Activated CD4-positive, alpha-beta T cell treated with anti-CD3 and anti-CD28 coated beads for 36 hours (primary cell): ENCODE measurements at regions of chr10 and their contacts with region 1.

Region 1: DNA sequence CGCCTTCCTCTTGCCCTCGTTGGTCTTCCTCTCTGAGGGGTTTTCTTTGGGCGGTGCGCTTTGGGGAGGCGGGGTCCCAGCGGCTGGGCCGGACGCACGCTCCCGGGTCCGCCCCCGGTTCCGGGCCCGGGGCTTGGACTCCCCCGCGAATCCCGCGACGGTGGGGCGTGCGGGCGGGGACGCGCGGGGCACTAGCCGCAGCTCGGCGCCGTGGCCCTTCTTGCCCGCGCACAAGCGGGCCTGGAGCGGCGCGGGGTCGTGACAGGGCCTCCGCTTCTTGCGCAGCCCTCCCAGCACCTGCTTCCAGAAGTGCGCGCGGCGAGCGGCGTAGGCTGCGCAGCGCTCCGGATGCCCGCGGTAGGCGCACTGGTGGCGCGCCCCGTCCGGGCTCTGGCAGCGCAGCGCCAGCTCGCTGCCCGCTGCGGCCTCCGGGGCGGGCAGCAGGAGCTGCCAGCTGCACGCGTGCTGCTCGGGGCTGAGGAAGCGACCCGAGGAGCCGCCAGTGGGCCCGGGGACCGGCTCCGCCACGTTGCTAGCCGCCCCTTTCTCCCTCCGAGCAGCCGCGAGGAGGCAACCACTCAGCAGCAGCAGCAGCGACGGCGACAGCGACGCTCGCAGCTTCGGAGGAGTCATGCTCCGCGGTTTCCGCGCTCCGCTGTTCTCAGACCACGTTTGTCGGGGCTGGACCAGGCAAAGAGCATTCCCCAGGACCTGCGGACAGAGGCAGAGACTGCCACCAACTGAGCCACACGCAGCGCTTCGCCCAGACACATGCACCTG is 759 bp downstream of the FGFBP3 start:
- DNase-seq: peak; percentile 87
- ATAC-seq: peak; percentile 90
- H3K4me3 Mint-ChIP-seq: peak overlapping the region; percentile 87
- H3K27ac Mint-ChIP-seq: peak overlapping the region; percentile 82
- H3K4me1 Mint-ChIP-seq: peaks cover 21% of the 10 kb centered on the region
- H3K27me3 Mint-ChIP-seq: peaks cover 5% of the 10 kb centered on the region

Region 2: GRCh38 chr10:90871766-90872647 is 1036.5 kb before region 1 on chr10 and contains the start of gene RPP30:
- CTCF ChIA-PET with region 1: no interaction called
- POLR2A ChIA-PET with region 1: no interaction called
- intact Hi-C with region 1: loop called in 1 of 2 experiments (anchors 10 kb)
- DNase-seq: peak; percentile 92
- ATAC-seq: peak; percentile 93
- H3K4me3 Mint-ChIP-seq: peak within 1 kb of the TSS; percentile 89
- H3K27ac Mint-ChIP-seq: peak within 1 kb of the TSS; percentile 98
- H3K4me1 Mint-ChIP-seq: peaks cover 34% of the 10 kb centered on the region
- H3K27me3 Mint-ChIP-seq: peaks cover 17% of the 10 kb centered on the region
- total RNA-seq, gene RPP30: 103 to 115 TPM

Region 3: GRCh38 chr10:91298224-91298871 is 610.2 kb before region 1 on chr10:
- CTCF ChIA-PET with region 1: interaction called, 16 read pairs
- POLR2A ChIA-PET with region 1: interaction called, 3 read pairs
- intact Hi-C with region 1: loop called (anchors 1 to 2 kb)
- DNase-seq: peak; percentile 91
- ATAC-seq: peak; percentile 98
- H3K4me3 Mint-ChIP-seq: peak overlapping the region; percentile 61
- H3K27ac Mint-ChIP-seq: peak overlapping the region; percentile 22
- H3K4me1 Mint-ChIP-seq: peaks cover 9% of the 10 kb centered on the region
- H3K27me3 Mint-ChIP-seq: no peaks in the 10 kb centered on the region

Region 4: GRCh38 chr10:91409869-91410637 is 498.5 kb before region 1 on chr10 and contains the start of gene HECTD2:
- CTCF ChIA-PET with region 1: no interaction called
- POLR2A ChIA-PET with region 1: no interaction called
- intact Hi-C with region 1: loop called (anchors 1 to 10 kb)
- DNase-seq: peak; percentile 90
- ATAC-seq: peak; percentile 80
- H3K4me3 Mint-ChIP-seq: peak within 1 kb of the TSS; percentile 86
- H3K27ac Mint-ChIP-seq: peak within 1 kb of the TSS; percentile 97
- H3K4me1 Mint-ChIP-seq: peaks cover 21% of the 10 kb centered on the region
- H3K27me3 Mint-ChIP-seq: peaks cover 4% of the 10 kb centered on the region
- total RNA-seq, gene HECTD2: 3.5 to 9.7 TPM

Region 5: DNA sequence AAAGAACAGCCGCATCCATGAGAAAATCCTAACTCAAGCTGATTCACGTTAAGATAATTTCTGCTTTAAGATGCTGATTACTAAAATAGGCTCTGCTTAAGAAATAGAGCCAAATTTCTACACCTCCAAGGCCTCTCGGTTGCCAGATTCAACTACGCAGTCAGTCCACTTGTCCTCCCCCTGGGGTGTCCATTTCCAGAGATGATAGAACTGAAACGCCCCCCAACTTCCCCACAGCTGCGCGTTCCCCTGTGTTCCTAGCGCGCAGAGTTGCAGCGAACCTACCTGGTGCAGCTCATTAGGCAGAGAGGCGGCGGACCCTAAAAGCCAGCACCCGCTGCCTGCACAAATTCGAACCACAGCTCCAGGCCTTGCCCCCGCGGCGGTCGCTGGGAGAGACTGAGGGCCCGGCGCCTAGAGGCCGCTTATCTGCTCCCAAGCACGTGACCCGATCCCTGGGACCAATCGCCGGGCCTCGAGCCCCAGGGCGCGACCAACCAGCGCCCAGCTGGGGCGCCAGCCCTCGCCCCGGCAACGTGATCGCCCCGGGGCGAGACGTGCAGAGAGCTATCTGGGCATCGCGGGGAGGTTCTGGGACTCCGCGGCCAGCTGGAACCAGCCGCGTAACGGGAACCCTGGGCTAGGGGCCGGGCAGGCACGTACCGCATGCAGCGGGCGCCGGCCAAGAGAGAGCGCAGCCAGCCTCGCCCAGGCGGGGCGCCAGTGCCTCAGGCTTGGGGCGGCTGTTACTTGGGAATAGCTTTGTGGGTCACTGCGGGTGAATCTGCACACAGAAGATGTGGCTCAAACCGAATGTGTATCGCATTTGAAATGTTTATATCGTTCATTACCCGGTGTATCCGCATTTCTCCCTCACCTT is 275.6 kb before region 1 on chr10 and contains the start of gene PPP1R3C:
- CTCF ChIA-PET with region 1: interaction called, 7 read pairs
- POLR2A ChIA-PET with region 1: no interaction called
- intact Hi-C with region 1: loop called (anchors 1 to 10 kb)
- DNase-seq: peak; percentile 83
- ATAC-seq: peak; percentile 95
- H3K4me3 Mint-ChIP-seq: peak within 1 kb of the TSS; percentile 65
- H3K27ac Mint-ChIP-seq: no peak within 1 kb of the TSS
- H3K4me1 Mint-ChIP-seq: peaks cover 8% of the 10 kb centered on the region
- H3K27me3 Mint-ChIP-seq: peaks cover 59% of the 10 kb centered on the region
- total RNA-seq, gene PPP1R3C: 0.63 to 0.71 TPM

Region 6: GRCh38 chr10:91856637-91857036 is 51.9 kb before region 1 on chr10:
- CTCF ChIA-PET with region 1: interaction called, 4 read pairs
- POLR2A ChIA-PET with region 1: no interaction called
- intact Hi-C with region 1: loop called in 1 of 2 experiments (anchors 2 kb)
- DNase-seq: no peak
- ATAC-seq: no peak
- H3K4me3 Mint-ChIP-seq: no peak overlapping the region
- H3K27ac Mint-ChIP-seq: no peak overlapping the region
- H3K4me1 Mint-ChIP-seq: no peaks in the 10 kb centered on the region
- H3K27me3 Mint-ChIP-seq: no peaks in the 10 kb centered on the region

Region 7: GRCh38 chr10:91923371-91924211 is 15.1 kb after region 1 on chr10 and contains the start of gene BTAF1:
- CTCF ChIA-PET with region 1: interaction called, 22 read pairs
- POLR2A ChIA-PET with region 1: interaction called, 13 read pairs
- intact Hi-C with region 1: loop called (anchors 1 kb)
- DNase-seq: peak; percentile 96
- ATAC-seq: peak; percentile 96
- H3K4me3 Mint-ChIP-seq: peak within 1 kb of the TSS; percentile 97
- H3K27ac Mint-ChIP-seq: peak within 1 kb of the TSS; percentile 99
- H3K4me1 Mint-ChIP-seq: peaks cover 37% of the 10 kb centered on the region
- H3K27me3 Mint-ChIP-seq: peaks cover 2% of the 10 kb centered on the region
- total RNA-seq, gene BTAF1: 59.0 to 59.4 TPM